ENCODE measurements at regions of chr7 and their contacts with region 1.

Region 1: GRCh38 chr7:75642810-75643486 is 95.8 kb downstream of the HIP1 start:
- DNase-seq: peak in 1 of 5 donors; percentile 36
- ATAC-seq: peak in 2 of 4 donors; percentile 29 to 57
- H3K4me3 ChIP-seq: no peak overlapping the region
- H3K27ac ChIP-seq: no peak overlapping the region
- H3K4me1 ChIP-seq: peaks cover 0 to 20% (median 13%) of the 10 kb centered on the region in 12 donors
- H3K27me3 ChIP-seq: no peaks in the 10 kb centered on the region
- CTCF ChIP-seq: peak; percentile 38 to 80 (median 58)
- POLR2A ChIP-seq: no peak

Region 2: GRCh38 chr7:75565132-75565837 is 77.7 kb before region 1 on chr7:
- intact Hi-C with region 1: loop called in 1 of 10 experiments (anchors 5 kb)
- DNase-seq: peak in 4 of 5 donors; percentile 32 to 71 (median 42)
- ATAC-seq: peak; percentile 57 to 86 (median 68)
- H3K4me3 ChIP-seq: no peak overlapping the region
- H3K27ac ChIP-seq: peak overlapping the region; percentile 62 to 88 (median 76)
- H3K4me1 ChIP-seq: peaks cover 0 to 27% (median 11%) of the 10 kb centered on the region in 12 donors
- H3K27me3 ChIP-seq: no peaks in the 10 kb centered on the region
- CTCF ChIP-seq: no peak
- POLR2A ChIP-seq: no peak

Region 3: DNA sequence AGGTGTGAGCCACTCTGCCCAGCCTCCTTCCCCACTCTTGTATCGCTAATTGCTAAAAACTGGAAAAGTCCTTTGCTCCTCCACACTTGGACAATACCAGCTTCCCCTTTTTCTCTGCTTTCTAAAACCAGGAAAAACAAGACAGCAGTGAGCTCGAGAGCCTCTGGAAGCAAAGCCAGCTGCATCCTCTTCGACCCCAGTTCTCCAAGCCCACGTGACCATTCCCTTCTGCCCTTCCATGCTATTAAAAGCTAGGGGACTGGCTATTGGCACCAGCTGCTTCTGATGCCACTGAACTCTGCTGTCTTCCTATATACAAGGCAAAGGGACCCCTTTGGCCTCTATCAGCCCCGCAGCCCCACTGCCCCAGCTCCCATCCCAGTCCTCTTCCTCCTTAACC is 58.6 kb before region 1 on chr7:
- intact Hi-C with region 1: loop called in 1 of 10 experiments (anchors 10 kb)
- DNase-seq: no peak
- ATAC-seq: peak in 1 of 4 donors; percentile 56
- H3K4me3 ChIP-seq: no peak overlapping the region
- H3K27ac ChIP-seq: no peak overlapping the region
- H3K4me1 ChIP-seq: no peaks in the 10 kb centered on the region
- H3K27me3 ChIP-seq: no peaks in the 10 kb centered on the region
- CTCF ChIP-seq: no peak
- POLR2A ChIP-seq: no peak

Region 4: GRCh38 chr7:75688200-75689136 is 45.5 kb after region 1 on chr7:
- intact Hi-C with region 1: no loop called
- DNase-seq: peak; percentile 33 to 73 (median 37)
- ATAC-seq: peak in 2 of 4 donors; percentile 20 to 39
- H3K4me3 ChIP-seq: no peak overlapping the region
- H3K27ac ChIP-seq: no peak overlapping the region
- H3K4me1 ChIP-seq: peaks cover 0 to 14% (median 5%) of the 10 kb centered on the region in 12 donors
- H3K27me3 ChIP-seq: no peaks in the 10 kb centered on the region
- CTCF ChIP-seq: no peak
- POLR2A ChIP-seq: no peak

Region 5: GRCh38 chr7:75711656-75712514 is 68.9 kb after region 1 on chr7:
- intact Hi-C with region 1: no loop called
- DNase-seq: peak in 4 of 5 donors; percentile 24 to 38 (median 35)
- ATAC-seq: peak; percentile 79 to 88 (median 82)
- H3K4me3 ChIP-seq: peak overlapping the region in 8 of 12 donors; percentile 3 to 31 (median 19)
- H3K27ac ChIP-seq: peak overlapping the region; percentile 71 to 95 (median 82)
- H3K4me1 ChIP-seq: peaks cover 6 to 39% (median 30%) of the 10 kb centered on the region in 12 donors
- H3K27me3 ChIP-seq: no peaks in the 10 kb centered on the region
- CTCF ChIP-seq: no peak
- POLR2A ChIP-seq: no peak

Measured in heart left ventricle (tissue), 16 donors.